ENCODE measurements at regions of chr16 and their contacts with region 1.

Region 1: DNA sequence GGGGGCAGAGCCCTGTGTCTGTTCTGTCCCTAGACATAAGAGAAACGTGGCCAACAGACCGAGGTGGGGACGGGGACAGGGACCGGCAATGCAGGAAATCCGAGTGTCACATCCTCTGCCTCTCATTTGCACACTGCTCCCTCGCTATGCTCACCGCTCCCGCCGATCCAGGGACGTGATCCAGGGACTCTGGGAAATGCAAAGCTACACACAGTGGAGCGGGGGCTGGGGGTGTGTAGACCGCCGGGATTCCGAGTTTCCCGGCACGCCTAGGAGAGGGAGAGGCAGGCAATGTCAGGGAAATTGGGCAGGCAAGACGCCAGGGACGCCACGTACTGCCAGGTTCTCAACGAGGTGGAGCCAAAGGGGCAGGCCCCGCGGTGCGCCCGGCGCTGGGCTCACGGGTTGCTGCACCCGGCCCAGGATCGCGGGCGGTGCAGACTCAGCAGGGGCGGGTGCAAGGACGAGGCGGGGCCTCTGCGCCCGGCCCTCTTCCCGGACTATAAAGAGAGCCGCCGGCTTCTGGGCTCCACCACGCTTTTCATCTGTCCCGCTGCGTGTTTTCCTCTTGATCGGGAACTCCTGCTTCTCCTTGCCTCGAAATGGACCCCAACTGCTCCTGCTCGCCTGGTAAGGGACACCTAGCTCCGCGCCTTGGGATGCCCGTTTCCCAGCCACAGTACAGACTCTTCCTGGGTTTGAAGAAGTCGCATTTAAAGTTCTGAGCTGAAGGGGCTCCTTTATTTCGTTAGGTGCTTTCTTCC is at the start of gene MT1X:
- DNase-seq: peak; percentile 85 to 89
- ATAC-seq: peak; percentile 96 to 99
- H3K4me3 ChIP-seq: peak within 1 kb of the TSS; percentile 60
- H3K27ac ChIP-seq: peak within 1 kb of the TSS; percentile 84 to 85
- H3K4me1 ChIP-seq: peaks cover 9% of the 10 kb centered on the region; the same call in 2 of the 3 replicates
- CTCF ChIP-seq: no peak
- EP300 ChIP-seq: no peak
- POLR2A ChIP-seq: peak; percentile 75
- RAD21 ChIP-seq: no peak
- polyA plus RNA-seq, gene MT1X: 44.0 and 74.5 TPM in 2 replicates

Region 2: GRCh38 chr16:56657555-56658326 is 24.4 kb before region 1 on chr16 and contains the start of gene MT1F:
- CTCF ChIA-PET with region 1: interaction called, 15 read pairs
- POLR2A ChIA-PET with region 1: interaction called, 6 read pairs
- DNase-seq: peak; percentile 75 to 78
- ATAC-seq: peak; percentile 93 to 94
- H3K4me3 ChIP-seq: peak within 1 kb of the TSS; percentile 56
- H3K27ac ChIP-seq: peak within 1 kb of the TSS; percentile 75 to 83
- H3K4me1 ChIP-seq: peaks cover 6% of the 10 kb centered on the region; the same call in 2 of the 3 replicates
- CTCF ChIP-seq: no peak
- EP300 ChIP-seq: no peak
- POLR2A ChIP-seq: 0 out of 2 replicates have a peak, but pooled peaks have one; percentile 15
- RAD21 ChIP-seq: no peak
- polyA plus RNA-seq, gene MT1F: 4.1 and 5.6 TPM in 2 replicates

Region 3: GRCh38 chr16:56709443-56710040 is 27.4 kb after region 1 on chr16:
- CTCF ChIA-PET with region 1: no interaction called
- POLR2A ChIA-PET with region 1: no interaction called
- DNase-seq: no peak
- ATAC-seq: no peak
- H3K4me3 ChIP-seq: no peak overlapping the region
- H3K27ac ChIP-seq: no peak overlapping the region
- H3K4me1 ChIP-seq: no peaks in the 10 kb centered on the region
- CTCF ChIP-seq: no peak
- EP300 ChIP-seq: no peak
- POLR2A ChIP-seq: no peak
- RAD21 ChIP-seq: no peak